MCF 10A (cell line): ENCODE measurements at regions of chr5 and their contacts with region 1.

Region 1: DNA sequence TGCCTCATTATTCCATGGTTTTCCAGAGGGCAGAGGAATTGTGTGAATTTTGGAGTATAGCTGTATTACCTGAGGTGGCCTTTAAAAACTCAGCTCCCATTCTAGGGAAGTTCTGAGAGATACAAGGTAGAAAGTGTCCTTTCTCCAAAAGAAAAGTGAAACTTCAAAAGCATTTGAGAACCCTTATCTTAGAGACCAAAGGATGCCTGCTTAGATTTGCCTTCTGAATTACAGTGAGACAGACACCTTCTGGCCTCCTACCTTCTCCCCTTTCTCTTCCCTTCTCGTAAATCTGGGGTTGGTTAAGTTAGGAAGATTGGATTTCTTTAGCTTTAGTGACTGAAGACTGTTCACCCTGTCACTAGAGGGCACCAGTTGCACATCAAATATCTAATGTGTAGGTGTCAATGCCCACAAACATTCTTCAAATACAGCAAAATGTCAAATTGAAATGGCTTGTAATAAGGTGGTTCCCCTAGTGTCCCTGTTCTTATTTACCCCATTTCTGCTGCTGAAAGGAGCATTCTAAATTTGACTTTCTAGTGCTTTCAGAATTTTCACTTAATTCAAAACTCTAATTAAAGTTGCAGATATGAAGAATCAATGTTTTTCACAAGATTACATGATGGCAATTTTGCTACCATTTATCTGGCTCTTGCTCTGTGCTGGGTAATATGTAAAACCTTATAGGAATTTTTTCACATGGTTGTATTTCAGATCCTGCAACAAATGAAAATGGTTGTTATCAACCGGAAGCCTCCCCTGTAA is 46.7 kb downstream of the PRRC1 start:
- DNase-seq: peak; percentile 89
- H3K4me3 Mint-ChIP-seq: no peak overlapping the region
- H3K27ac Mint-ChIP-seq: no peak overlapping the region
- H3K4me1 Mint-ChIP-seq: peaks cover 5% of the 10 kb centered on the region
- H3K27me3 Mint-ChIP-seq: peaks cover 10% of the 10 kb centered on the region
- CTCF ChIP-seq: peak; percentile 77

Region 2: GRCh38 chr5:127549518-127549917 is 14.7 kb before region 1 on chr5:
- CTCF ChIA-PET with region 1: interaction called, 13 read pairs
- POLR2A ChIA-PET with region 1: interaction called, 3 read pairs
- intact Hi-C with region 1: no loop called
- DNase-seq: no peak
- H3K4me3 Mint-ChIP-seq: no peak overlapping the region
- H3K27ac Mint-ChIP-seq: no peak overlapping the region
- H3K4me1 Mint-ChIP-seq: peaks cover 9% of the 10 kb centered on the region
- H3K27me3 Mint-ChIP-seq: no peaks in the 10 kb centered on the region
- CTCF ChIP-seq: no peak

Region 3: DNA sequence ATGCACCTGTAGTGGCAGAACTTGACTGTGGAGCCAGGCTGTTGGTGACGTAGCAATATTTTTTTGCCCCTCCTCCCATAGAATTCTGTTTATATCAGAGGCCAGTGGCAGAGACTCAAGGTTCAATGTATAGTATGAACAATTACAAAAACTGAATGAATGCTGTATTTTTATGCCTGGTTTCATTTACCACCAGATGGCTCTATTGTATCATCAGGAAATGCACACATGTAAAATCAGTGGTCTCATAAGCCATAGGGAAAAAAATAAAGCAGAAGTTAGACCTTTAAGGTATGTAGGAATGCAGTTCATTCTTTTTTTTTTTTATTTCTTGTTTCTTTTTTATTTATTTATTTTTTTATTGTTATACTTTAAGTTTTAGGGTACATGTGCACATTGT is 182.6 kb after region 1 on chr5:
- CTCF ChIA-PET with region 1: no interaction called
- POLR2A ChIA-PET with region 1: no interaction called
- intact Hi-C with region 1: loop called (anchors 1 kb)
- DNase-seq: peak; percentile 43
- H3K4me3 Mint-ChIP-seq: no peak overlapping the region
- H3K27ac Mint-ChIP-seq: no peak overlapping the region
- H3K4me1 Mint-ChIP-seq: no peaks in the 10 kb centered on the region
- H3K27me3 Mint-ChIP-seq: peaks cover 25% of the 10 kb centered on the region
- CTCF ChIP-seq: peak; percentile 57

Region 4: GRCh38 chr5:128163991-128164390 is 599.8 kb after region 1 on chr5:
- CTCF ChIA-PET with region 1: interaction called, 10 read pairs
- POLR2A ChIA-PET with region 1: no interaction called
- intact Hi-C with region 1: no loop called
- DNase-seq: peak; percentile 75
- H3K4me3 Mint-ChIP-seq: no peak overlapping the region
- H3K27ac Mint-ChIP-seq: no peak overlapping the region
- H3K4me1 Mint-ChIP-seq: peaks cover 5% of the 10 kb centered on the region
- H3K27me3 Mint-ChIP-seq: no peaks in the 10 kb centered on the region
- CTCF ChIP-seq: no peak

Region 5: GRCh38 chr5:128201065-128201926 is 637.1 kb after region 1 on chr5:
- CTCF ChIA-PET with region 1: interaction called, 42 read pairs
- POLR2A ChIA-PET with region 1: interaction called, 4 read pairs
- intact Hi-C with region 1: loop called (anchors 1 kb)
- DNase-seq: peak; percentile 81
- H3K4me3 Mint-ChIP-seq: peak overlapping the region; percentile 42
- H3K27ac Mint-ChIP-seq: no peak overlapping the region
- H3K4me1 Mint-ChIP-seq: peaks cover 21% of the 10 kb centered on the region
- H3K27me3 Mint-ChIP-seq: no peaks in the 10 kb centered on the region
- CTCF ChIP-seq: peak; percentile 95